A549 (cell line): ENCODE measurements at regions of chr11 and their contacts with region 1.

Region 1: GRCh38 chr11:112588252-112588694 is 327.6 kb upstream of the PLET1 start:
- DNase-seq: peak; percentile 44 to 69
- ATAC-seq: peak; percentile 86 to 94; a peak in 5 of 6 replicates
- H3K4me3 ChIP-seq: no peak overlapping the region
- H3K27ac ChIP-seq: no peak overlapping the region
- H3K4me1 ChIP-seq: no peaks in the 10 kb centered on the region
- CTCF ChIP-seq: peak; percentile 51
- EP300 ChIP-seq: no peak
- POLR2A ChIP-seq: no peak
- RAD21 ChIP-seq: peak; percentile 60 to 63

Region 2: GRCh38 chr11:112498701-112499100 is 89.6 kb before region 1 on chr11:
- CTCF ChIA-PET with region 1: no interaction called
- POLR2A ChIA-PET with region 1: no interaction called
- DNase-seq: no peak
- ATAC-seq: no peak
- H3K4me3 ChIP-seq: no peak overlapping the region
- H3K27ac ChIP-seq: no peak overlapping the region
- H3K4me1 ChIP-seq: no peaks in the 10 kb centered on the region
- CTCF ChIP-seq: no peak
- EP300 ChIP-seq: no peak
- POLR2A ChIP-seq: no peak
- RAD21 ChIP-seq: no peak

Region 3: GRCh38 chr11:112784323-112785073 is 196.2 kb after region 1 on chr11:
- CTCF ChIA-PET with region 1: no interaction called
- POLR2A ChIA-PET with region 1: no interaction called
- DNase-seq: no peak
- ATAC-seq: peak in 1 of 2 experiments; percentile 13; a peak in 2 of 6 replicates
- H3K4me3 ChIP-seq: no peak overlapping the region
- H3K27ac ChIP-seq: no peak overlapping the region
- H3K4me1 ChIP-seq: no peaks in the 10 kb centered on the region
- CTCF ChIP-seq: no peak
- EP300 ChIP-seq: no peak
- POLR2A ChIP-seq: no peak
- RAD21 ChIP-seq: no peak

Region 4: DNA sequence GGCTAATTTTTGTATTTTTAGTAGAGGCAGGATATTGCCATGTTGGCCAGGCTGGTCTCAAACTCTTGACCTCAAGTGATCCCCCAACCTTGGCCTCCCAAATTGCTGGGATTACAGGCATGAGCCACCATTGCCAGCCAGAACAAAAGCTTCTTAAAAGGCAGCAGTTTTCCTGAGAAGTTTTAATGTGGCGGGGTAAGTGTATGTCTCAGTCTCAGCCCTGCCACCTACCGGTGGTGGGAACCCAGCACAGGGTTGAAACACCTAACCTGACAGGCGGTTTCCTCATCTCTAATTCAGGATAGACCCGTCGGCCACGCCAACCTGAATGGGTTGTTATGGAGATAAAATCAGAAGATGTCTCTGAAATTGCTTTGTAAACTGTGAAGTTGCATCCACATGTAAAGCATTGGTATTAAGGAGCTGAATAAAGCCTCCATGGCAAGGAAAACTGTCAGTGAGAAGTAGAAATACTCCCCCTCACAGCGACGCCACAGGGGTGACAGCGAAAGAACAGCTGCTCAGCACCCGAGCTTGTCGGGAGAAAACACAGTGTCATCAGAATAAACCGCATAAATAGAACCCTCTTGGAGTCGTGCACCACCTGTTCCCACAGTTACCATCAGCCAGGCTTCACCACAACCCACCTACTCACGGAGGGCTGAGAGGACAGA is 207.0 kb after region 1 on chr11:
- CTCF ChIA-PET with region 1: interaction called, 11 read pairs
- POLR2A ChIA-PET with region 1: no interaction called
- DNase-seq: peak; percentile 37 to 57
- ATAC-seq: peak; percentile 84 to 91; a peak in 5 of 6 replicates
- H3K4me3 ChIP-seq: no peak overlapping the region
- H3K27ac ChIP-seq: no peak overlapping the region
- H3K4me1 ChIP-seq: no peaks in the 10 kb centered on the region
- CTCF ChIP-seq: peak; percentile 41
- EP300 ChIP-seq: no peak
- POLR2A ChIP-seq: no peak
- RAD21 ChIP-seq: peak; percentile 37 to 43; a peak in 3 of 5 replicates

Region 5: DNA sequence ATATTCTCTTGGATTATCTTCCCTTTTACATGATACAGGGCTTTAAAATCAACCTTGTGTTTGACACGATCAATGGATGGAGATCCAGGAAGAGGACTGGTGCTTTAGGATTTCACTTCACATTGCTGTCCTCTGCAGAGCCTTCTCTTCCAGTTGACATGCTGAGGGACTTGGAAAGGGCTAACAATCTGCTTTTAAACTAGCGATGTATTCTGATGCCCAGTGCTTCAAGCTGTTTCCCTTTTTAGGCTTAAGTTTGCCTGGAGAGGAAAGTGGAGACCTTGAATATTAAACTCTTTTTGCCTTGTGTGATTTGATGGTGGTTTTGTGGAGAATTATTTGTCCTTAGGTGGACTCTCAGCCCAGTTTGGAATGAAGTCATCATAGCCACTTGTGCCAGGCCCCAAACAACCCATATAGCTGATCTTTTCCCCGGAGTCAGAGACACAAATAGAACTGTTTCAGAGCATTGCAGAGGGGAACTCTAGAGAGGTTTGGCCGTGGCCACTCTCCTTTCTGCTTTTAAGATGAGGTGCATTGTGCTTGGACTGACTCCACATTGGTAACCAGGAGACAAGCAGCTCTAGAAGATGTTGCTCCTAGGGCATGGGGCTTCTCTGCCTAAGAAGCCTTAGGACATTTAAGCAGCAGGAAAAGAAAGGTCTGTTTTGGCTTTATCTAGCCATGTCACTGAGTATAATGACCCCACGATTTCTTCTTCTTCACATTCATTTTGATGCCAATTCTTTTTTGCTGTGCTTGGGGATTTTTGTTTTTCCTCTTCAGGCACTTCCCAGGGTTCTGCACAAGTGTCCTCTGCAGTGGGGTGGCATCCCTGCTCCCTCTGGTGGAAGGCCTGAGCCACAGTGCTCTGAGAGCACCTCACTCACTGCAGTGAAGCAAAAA is 525.8 kb after region 1 on chr11:
- CTCF ChIA-PET with region 1: interaction called, 10 read pairs
- POLR2A ChIA-PET with region 1: no interaction called
- DNase-seq: peak in 1 of 2 experiments; percentile 33
- ATAC-seq: peak; percentile 97; a peak in 5 of 6 replicates
- H3K4me3 ChIP-seq: no peak overlapping the region
- H3K27ac ChIP-seq: no peak overlapping the region
- H3K4me1 ChIP-seq: no peaks in the 10 kb centered on the region
- CTCF ChIP-seq: peak; percentile 41; the same call in 1 of the 3 replicates
- EP300 ChIP-seq: no peak
- POLR2A ChIP-seq: no peak
- RAD21 ChIP-seq: peak; percentile 44 to 54